ENCODE measurements at regions of chr3 and their contacts with region 1.

Region 1: GRCh38 chr3:184513276-184514170 is 48.1 kb upstream of the EPHB3 start:
- DNase-seq: peak; percentile 90
- ATAC-seq: peak; percentile 98

Region 2: GRCh38 chr3:183857863-183858262 is 655.7 kb before region 1 on chr3:
- intact Hi-C with region 1: no loop called
- DNase-seq: no peak
- ATAC-seq: no peak

Region 3: DNA sequence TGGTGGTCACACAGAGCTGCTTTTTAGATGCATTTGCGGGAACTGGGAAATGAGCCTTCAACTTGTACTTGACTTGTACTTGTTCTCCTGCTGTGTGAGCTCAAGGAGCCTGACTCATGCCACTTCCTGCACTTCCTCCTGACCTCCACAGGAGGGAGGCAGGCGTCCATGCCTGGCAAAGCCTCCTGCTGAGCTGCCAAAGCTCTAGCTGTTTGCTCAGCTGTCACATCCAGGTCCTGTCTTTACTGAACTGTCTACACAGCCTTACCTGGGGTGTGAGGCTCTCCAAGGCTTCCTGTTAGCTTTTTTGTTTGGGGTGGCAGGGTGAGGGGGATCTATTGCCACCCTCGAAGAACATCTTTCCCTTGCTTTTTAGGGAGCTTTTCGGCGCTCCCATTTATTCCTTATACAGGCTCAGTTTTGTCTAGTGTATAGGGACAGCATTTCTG is 141.9 kb before region 1 on chr3:
- intact Hi-C with region 1: loop called (anchors 1 kb)
- DNase-seq: peak; percentile 83
- ATAC-seq: peak; percentile 87

Region 4: GRCh38 chr3:184417619-184418327 is 95.8 kb before region 1 on chr3:
- intact Hi-C with region 1: loop called (anchors 2 kb)
- DNase-seq: peak; percentile 84
- ATAC-seq: peak; percentile 82

Region 5: DNA sequence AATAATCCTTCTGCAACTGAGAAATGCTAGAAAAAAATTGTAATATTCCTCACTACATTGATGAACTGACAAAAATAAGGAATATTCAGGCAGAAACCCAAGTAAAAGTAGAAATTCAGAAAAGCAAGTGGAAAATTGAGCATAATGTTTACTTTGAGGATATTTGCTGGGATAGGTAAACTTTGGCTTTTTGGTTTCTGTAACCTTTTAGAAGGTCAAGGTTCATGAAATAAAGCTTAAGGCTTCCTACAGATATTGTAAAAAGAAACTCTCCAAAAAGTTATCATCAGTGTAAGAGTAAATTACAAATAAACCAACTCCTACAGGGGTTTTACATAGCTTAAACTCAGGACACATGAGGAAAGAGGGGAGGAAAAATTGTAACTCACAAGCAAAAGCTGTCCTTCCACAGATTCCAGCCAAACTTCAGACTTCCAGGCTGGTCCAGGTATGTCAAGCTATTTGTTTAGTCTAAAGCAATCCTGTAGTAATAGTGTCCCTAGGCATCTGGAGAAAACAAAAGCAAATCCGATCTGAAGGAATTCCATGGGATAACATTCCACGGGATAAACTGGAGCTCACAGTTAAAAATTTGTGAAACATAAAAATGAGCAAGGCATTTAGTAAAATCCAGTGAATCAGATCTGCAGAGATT is 618.2 kb after region 1 on chr3:
- intact Hi-C with region 1: no loop called
- DNase-seq: no peak
- ATAC-seq: no peak

Measured in Right ventricle myocardium inferior (tissue), 1 donor.